Mammary epithelial cell (primary cell): ENCODE measurements at regions of chr3 and their contacts with region 1.

Region 1: DNA sequence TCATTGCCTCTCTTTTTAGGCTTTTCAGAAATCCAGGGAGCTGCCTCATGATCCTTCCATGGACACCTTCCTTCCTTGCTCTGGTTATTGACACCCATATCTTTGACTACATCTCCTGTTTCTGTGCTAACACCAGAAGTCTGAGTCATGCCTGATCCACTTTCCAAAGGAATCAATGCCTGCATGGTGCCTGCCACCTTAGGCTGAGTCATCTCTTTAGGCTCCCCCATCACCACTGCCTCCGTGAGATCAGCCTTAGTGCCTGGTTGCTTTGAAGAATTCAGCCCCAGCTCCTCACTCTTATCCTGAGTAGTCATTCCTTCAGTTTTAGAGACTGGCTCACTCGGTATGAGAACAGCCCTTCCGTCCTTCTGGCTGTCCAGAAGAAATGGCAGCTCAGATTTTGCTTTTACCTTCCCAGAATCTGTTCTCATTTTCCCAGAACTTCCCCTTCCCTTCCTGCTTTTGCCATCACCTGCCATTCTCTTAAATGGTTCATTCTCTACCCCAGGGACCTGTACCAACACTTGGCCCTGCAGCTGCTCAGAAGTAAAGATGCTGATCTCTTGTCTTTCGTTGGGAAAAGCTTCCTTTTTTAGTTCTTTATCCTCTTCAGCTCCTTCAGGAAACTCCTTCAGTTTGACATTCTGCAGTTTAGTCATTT is 105.3 kb downstream of the MAP4 start:
- DNase-seq: peak; percentile 89
- H3K4me3 ChIP-seq: no peak overlapping the region
- H3K27ac ChIP-seq: no peak overlapping the region
- H3K4me1 ChIP-seq: peaks cover 21% of the 10 kb centered on the region
- H3K27me3 ChIP-seq: no peaks in the 10 kb centered on the region
- CTCF ChIP-seq: no peak

Region 2: GRCh38 chr3:47984097-47984728 is 73.3 kb after region 1 on chr3:
- CTCF ChIA-PET with region 1: no interaction called
- dilution Hi-C with region 1: loop called (anchors 5 kb)
- in situ Hi-C with region 1: no loop called
- intact Hi-C with region 1: no loop called
- DNase-seq: peak; percentile 49
- H3K4me3 ChIP-seq: no peak overlapping the region
- H3K27ac ChIP-seq: no peak overlapping the region
- H3K4me1 ChIP-seq: no peaks in the 10 kb centered on the region
- H3K27me3 ChIP-seq: no peaks in the 10 kb centered on the region
- CTCF ChIP-seq: no peak